ENCODE measurements at regions of chr14 and their contacts with region 1.

Region 1: GRCh38 chr14:80468331-80469122 is 257.2 kb upstream of the DIO2 start:
- DNase-seq: peak; percentile 67 to 84
- H3K4me3 ChIP-seq: no peak overlapping the region
- H3K4me3 Mint-ChIP-seq: no peak overlapping the region
- H3K27ac Mint-ChIP-seq: peak overlapping the region; percentile 59
- H3K4me1 ChIP-seq: peaks cover 16% of the 10 kb centered on the region
- H3K4me1 Mint-ChIP-seq: peaks cover 12% of the 10 kb centered on the region
- H3K27me3 ChIP-seq: no peaks in the 10 kb centered on the region
- H3K27me3 Mint-ChIP-seq: no peaks in the 10 kb centered on the region
- CTCF ChIP-seq: no peak

Region 2: DNA sequence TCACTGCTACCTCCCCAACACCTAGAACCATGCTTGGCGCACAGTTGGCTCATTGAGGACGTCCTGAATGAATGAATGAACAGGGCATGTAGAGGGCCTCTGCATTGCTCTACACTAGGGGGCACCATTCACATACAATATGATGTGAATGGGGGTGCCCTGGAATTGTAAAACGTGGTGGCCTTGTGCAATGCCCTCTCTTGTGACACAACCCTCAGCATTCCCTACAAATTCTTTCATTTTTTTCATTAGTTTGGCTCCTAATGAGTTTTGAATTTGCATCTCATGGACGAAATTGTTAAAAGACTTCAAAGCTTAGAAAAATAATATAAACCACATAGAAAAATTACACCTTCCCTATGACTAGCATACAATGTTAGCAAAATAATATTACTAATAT is 254.9 kb before region 1 on chr14:
- CTCF ChIA-PET with region 1: no interaction called
- POLR2A ChIA-PET with region 1: no interaction called
- intact Hi-C with region 1: loop called (anchors 10 kb)
- DNase-seq: peak; percentile 68 to 72
- H3K4me3 ChIP-seq: no peak overlapping the region
- H3K4me3 Mint-ChIP-seq: no peak overlapping the region
- H3K27ac Mint-ChIP-seq: no peak overlapping the region
- H3K4me1 ChIP-seq: peaks cover 21% of the 10 kb centered on the region
- H3K4me1 Mint-ChIP-seq: peaks cover 7% of the 10 kb centered on the region
- H3K27me3 ChIP-seq: no peaks in the 10 kb centered on the region
- H3K27me3 Mint-ChIP-seq: peaks cover 3% of the 10 kb centered on the region
- CTCF ChIP-seq: peak; percentile 45 to 52

Region 3: DNA sequence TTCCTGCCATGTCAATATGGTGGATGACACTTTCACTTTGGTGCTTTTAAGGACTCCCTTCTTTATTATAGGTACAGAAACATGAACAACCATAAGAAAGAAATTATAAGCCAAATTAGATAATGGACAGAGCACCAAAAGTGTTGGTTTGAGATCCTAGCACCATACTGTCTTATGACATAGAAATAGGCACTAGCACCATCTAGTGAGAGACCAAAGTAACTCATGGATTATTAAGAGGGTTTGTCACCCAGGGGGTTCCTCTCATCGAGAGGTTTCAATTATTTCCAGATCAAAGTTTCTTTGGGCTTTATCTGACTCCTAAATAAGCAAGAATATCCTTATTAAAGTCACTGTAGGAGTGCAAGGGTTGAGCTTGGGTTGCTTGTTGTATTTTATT is 104.3 kb before region 1 on chr14:
- CTCF ChIA-PET with region 1: no interaction called
- POLR2A ChIA-PET with region 1: no interaction called
- intact Hi-C with region 1: loop called (anchors 2 kb)
- DNase-seq: peak in 1 of 2 experiments; percentile 4
- H3K4me3 ChIP-seq: no peak overlapping the region
- H3K4me3 Mint-ChIP-seq: no peak overlapping the region
- H3K27ac Mint-ChIP-seq: no peak overlapping the region
- H3K4me1 ChIP-seq: peaks cover 12% of the 10 kb centered on the region
- H3K4me1 Mint-ChIP-seq: peaks cover 7% of the 10 kb centered on the region
- H3K27me3 ChIP-seq: no peaks in the 10 kb centered on the region
- H3K27me3 Mint-ChIP-seq: no peaks in the 10 kb centered on the region
- CTCF ChIP-seq: peak in 1 of 2 experiments; percentile 11

Region 4: DNA sequence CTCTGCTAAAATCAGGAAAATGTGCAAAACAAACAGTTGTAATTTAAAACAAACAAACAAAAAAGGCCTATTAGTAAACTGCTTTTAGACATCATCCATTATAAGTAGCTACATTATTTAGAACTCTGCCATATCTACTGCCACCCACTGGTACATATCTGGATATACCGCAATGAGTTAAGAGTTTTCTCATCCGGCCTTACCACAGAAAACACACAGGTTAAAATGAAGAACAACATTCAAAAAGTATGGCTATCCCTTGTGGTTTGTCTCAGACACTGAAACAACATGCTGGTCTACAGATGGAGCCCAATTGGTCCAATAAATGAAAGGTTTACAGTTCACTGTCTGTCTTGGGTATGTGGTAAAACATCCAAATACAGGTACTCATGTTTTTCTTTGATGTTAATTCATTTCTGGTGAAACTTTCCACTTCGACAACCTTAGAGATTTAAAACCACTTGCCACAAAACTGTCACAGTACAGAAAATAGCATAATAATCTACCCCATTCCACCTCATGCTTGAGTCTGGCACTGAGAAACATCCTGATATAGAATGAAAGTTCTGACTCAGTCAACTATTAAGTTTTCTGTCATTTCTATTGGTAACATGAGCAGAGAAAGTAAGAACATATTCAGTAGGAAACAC is 118.7 kb after region 1 on chr14:
- CTCF ChIA-PET with region 1: no interaction called
- POLR2A ChIA-PET with region 1: no interaction called
- intact Hi-C with region 1: loop called (anchors 2 kb)
- DNase-seq: no peak
- H3K4me3 ChIP-seq: no peak overlapping the region
- H3K4me3 Mint-ChIP-seq: no peak overlapping the region
- H3K27ac Mint-ChIP-seq: no peak overlapping the region
- H3K4me1 ChIP-seq: peaks cover 15% of the 10 kb centered on the region
- H3K4me1 Mint-ChIP-seq: peaks cover 12% of the 10 kb centered on the region
- H3K27me3 ChIP-seq: no peaks in the 10 kb centered on the region
- H3K27me3 Mint-ChIP-seq: no peaks in the 10 kb centered on the region
- CTCF ChIP-seq: peak; percentile 21 to 46

Region 5: DNA sequence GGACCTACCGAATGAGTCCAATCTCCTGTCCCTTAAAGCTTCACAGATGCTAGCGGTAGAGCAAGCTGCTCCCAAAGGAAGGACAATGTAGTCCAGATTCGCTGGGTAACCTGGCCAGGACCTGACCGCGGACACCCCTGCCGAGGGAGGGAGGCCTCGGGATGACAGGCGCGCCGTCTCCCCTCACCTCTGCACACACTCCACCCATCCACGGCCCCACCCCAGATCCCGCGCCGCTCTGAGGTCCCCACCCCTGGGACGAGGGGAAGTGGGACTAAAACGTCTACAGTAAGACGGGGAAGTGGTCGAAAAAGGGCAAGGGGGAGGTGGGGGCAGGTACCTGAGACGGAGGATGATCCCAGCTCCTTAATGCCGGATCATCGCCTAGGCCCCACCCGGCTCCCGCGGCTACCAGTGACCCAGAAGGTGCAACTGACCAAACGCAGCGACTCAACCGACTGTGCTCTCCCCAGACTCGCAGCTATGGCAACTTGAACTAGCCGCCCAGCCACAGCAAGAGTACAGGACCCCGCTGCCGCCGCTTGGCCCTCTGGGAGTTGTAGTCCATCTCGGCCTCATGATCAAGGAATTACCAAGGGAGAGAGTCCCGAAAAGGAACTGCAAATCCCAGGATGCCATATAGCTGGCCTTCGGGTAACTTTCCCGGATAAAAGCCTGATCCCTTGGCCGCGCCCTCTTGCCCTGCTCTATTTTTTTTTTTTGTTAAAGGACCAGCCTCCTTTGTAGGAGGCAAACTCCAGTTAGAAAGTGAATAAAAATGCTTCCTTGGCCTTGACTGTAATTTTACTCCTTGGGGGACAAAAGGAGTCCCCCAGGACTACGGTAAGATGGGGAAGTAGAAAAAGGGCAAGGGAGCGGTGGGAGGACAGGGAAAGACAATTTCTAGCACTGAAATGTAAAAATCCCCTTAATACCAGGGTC is 473.0 kb after region 1 on chr14 and contains the start of gene CEP128:
- CTCF ChIA-PET with region 1: no interaction called
- POLR2A ChIA-PET with region 1: no interaction called
- intact Hi-C with region 1: loop called (anchors 1 kb)
- DNase-seq: peak; percentile 96 to 97
- H3K4me3 ChIP-seq: peak within 1 kb of the TSS; percentile 81
- H3K4me3 Mint-ChIP-seq: peak within 1 kb of the TSS; percentile 88
- H3K27ac Mint-ChIP-seq: peak within 1 kb of the TSS; percentile 86
- H3K4me1 ChIP-seq: peaks cover 9% of the 10 kb centered on the region
- H3K4me1 Mint-ChIP-seq: peaks cover 7% of the 10 kb centered on the region
- H3K27me3 ChIP-seq: no peaks in the 10 kb centered on the region
- H3K27me3 Mint-ChIP-seq: no peaks in the 10 kb centered on the region
- CTCF ChIP-seq: no peak
- total RNA-seq, gene CEP128: 16.7 and 22.6 TPM in 2 replicates